PC-3 (cell line): ENCODE measurements at regions of chrX and their contacts with region 1.

Region 1: DNA sequence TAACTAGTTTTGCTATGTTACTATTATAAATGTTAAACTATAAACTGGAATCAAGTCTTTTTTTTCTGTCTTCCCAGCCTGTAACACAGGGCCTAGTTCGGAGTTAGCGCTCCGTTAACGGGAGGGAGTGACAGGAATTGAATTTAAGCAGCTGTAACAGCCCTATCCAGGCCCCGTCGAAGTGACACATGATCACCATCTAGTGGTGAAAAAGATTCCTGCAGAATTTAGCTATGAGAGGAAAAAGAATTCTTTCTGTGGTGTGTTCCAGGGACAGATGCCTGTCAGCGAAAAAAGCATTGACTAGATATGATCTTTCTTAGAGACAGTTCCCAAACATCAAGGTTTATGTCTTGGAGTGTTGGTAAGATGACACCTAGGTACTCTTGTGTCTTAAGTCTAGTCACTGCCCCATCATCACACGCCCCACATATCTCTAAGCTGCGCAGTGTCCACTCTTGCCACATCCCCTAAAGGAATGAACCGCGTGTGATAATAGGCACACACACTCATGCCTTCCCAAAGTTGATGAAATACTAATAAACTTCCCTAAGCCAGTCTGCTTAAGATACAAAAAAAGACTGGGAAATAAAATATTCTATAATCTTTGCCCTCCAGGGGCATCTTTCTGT is 2.0 kb downstream of the GAB3 start:
- DNase-seq: peak; percentile 88
- ATAC-seq: peak; percentile 71
- H3K4me3 ChIP-seq: no peak overlapping the region
- H3K27ac ChIP-seq: no peak overlapping the region
- H3K4me1 ChIP-seq: peaks cover 7% of the 10 kb centered on the region; the same call in 1 of the 2 replicates
- H3K27me3 ChIP-seq: peaks cover 30% of the 10 kb centered on the region
- CTCF ChIP-seq: peak; percentile 83

Region 2: DNA sequence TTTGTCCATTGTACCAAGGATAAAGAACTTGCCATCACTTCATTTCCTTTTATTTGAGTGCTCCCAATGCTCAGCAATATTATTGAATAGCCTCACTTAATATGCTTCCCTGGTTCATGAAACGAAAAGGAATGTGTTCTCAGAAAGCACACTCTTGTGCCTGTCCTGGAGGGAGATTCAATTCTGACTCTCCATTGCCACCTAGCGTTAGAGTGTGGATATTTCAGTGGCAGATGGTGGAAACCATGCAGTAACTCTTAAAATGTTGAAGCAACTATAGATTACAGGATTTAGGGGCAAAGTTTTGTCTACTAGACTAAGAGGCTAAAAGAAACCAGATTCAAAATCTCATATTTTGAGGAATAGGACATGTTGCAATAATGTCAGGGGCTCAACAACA is 33.9 kb before region 1 on chrX:
- CTCF ChIA-PET with region 1: interaction called, 6 read pairs
- POLR2A ChIA-PET with region 1: no interaction called
- intact Hi-C with region 1: loop called (anchors 1 kb)
- DNase-seq: peak; percentile 76
- ATAC-seq: peak; percentile 39
- H3K4me3 ChIP-seq: no peak overlapping the region
- H3K27ac ChIP-seq: no peak overlapping the region
- H3K4me1 ChIP-seq: peaks cover 43% of the 10 kb centered on the region
- H3K27me3 ChIP-seq: no peaks in the 10 kb centered on the region
- CTCF ChIP-seq: peak; percentile 85

Region 3: DNA sequence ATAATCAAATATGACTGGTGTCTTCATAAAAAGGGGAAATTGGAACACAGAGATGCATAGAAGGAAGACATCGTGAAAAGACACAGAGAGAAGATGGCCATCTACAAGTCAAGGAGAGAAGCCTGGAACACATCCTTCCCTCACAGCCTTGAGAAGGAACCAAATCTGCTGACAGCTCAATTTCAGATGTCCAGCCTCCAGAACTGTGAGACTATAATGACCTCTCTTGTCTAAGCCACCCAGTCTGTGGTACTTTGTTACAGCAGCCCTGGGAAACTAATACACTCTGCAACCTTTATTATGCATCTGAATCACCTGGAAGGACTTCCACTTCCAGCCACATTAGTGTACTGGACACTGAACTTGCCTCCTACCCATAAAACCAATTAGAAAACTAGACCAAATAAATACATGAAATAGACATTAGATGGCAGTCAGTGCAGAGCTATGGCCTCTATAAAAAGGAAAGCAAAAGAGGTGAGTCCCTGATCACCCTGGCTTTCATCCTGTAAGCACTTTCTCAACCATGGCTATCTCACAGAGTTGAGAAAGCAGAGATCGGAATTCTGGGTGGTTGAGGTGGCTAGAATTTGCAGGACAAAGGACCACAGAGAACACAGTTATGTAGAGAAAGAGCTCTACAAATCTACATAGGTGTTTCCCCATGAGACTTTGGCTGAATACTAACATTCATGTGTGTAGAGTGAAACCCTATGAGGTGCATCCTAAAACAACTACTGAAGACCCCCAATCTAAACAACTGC is 23.7 kb before region 1 on chrX:
- CTCF ChIA-PET with region 1: interaction called, 9 read pairs
- POLR2A ChIA-PET with region 1: interaction called, 5 read pairs
- intact Hi-C with region 1: loop called (anchors 1 kb)
- DNase-seq: no peak
- ATAC-seq: peak; percentile 30; the same call in 1 of the 2 replicates
- H3K4me3 ChIP-seq: no peak overlapping the region
- H3K27ac ChIP-seq: no peak overlapping the region
- H3K4me1 ChIP-seq: peaks cover 20% of the 10 kb centered on the region
- H3K27me3 ChIP-seq: no peaks in the 10 kb centered on the region
- CTCF ChIP-seq: 0 out of 2 replicates have a peak, but pooled peaks have one; percentile 8

Region 4: DNA sequence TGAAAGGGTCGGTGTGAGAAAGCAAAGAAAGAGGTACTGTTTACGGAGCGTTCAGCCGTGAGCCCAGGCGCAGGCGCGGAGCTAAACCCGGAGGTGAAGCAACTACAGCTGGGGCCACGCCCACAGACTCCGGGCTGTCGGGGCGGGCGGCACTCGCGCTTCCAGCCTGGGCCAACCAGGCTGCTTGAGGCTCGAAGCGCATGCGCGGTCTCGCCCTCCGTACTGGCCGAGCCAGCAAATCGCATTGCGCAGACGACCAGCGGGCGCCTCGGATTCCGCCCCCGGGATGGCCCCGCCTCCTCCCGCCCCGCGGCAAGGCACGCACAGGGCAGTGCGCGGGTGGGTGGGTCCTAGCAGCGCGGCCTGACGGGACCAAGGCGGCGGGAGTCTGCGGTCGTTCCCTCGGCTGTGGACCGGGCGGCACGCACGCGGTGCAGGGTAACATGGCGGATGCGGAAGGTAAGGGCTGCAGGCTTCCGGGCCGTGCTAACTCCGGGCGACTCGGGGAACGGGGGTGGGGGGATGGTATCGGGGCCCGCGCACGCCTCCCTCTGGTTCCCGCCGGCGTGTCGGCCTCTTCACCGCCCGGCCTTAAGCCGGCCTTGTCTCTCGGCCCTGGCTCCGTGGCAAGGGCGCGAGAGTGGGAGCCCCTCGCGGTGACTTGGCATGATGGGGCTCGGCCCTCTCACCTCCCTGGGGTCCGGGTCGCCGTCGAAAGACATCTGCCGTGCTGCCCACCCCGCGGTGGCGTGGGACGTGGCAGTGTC is 13.9 kb after region 1 on chrX and contains the start of gene DKC1:
- CTCF ChIA-PET with region 1: no interaction called
- POLR2A ChIA-PET with region 1: no interaction called
- intact Hi-C with region 1: no loop called
- DNase-seq: peak; percentile 98
- ATAC-seq: peak; percentile 91
- H3K4me3 ChIP-seq: peak within 1 kb of the TSS; percentile 93
- H3K27ac ChIP-seq: peak within 1 kb of the TSS; percentile 60
- H3K4me1 ChIP-seq: peaks cover 8% of the 10 kb centered on the region
- H3K27me3 ChIP-seq: no peaks in the 10 kb centered on the region
- CTCF ChIP-seq: no peak
- total RNA-seq, gene DKC1: 89.2 and 115 TPM in 2 replicates

Region 5: GRCh38 chrX:154840856-154841255 is 92.0 kb after region 1 on chrX:
- CTCF ChIA-PET with region 1: no interaction called
- POLR2A ChIA-PET with region 1: no interaction called
- intact Hi-C with region 1: loop called (anchors 1 kb)
- DNase-seq: peak; percentile 67
- ATAC-seq: peak; percentile 60
- H3K4me3 ChIP-seq: no peak overlapping the region
- H3K27ac ChIP-seq: no peak overlapping the region
- H3K4me1 ChIP-seq: no peaks in the 10 kb centered on the region
- H3K27me3 ChIP-seq: no peaks in the 10 kb centered on the region
- CTCF ChIP-seq: peak; percentile 69